Caco-2 (cell line): ENCODE measurements at regions of chr10 and their contacts with region 1.

Region 1: DNA sequence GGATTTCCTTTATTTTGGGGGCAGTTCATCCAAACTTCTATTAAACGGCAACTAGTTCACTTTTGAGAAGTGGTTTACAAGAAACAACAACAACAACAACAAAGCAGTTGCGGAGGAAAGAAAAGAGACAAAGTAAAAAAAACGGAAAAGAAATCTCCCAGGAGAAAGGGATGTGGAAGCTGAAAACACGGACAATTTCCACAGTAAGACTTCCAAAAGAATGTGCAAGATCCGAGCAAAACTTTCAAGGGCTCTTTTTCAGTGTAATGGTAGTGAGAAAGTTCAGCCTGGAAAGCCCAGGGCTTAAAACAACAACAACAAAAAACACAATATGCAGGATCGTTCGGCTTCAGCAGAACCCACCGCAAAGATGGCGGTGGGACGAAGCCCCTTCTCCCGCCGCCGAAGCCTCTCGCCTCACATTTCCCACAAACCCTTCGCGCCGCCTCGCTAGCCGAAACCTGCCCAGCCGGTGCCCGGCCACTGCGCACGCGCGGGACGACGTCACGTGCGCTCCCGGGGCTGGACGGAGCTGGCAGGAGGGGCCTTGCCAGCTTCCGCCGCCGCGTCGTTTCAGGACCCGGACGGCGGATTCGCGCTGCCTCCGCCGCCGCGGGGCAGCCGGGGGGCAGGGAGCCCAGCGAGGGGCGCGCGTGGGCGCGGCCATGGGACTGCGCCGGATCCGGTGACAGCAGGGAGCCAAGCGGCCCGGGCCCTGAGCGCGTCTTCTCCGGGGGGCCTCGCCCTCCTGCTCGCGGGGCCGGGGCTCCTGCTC is at the start of gene TNKS2:
- DNase-seq: peak; percentile 95 to 98
- H3K4me3 ChIP-seq: peak within 1 kb of the TSS; percentile 98
- H3K4me3 Mint-ChIP-seq: peak within 1 kb of the TSS; percentile 96
- H3K27ac Mint-ChIP-seq: peak within 1 kb of the TSS; percentile 97
- H3K4me1 ChIP-seq: peaks cover 24% of the 10 kb centered on the region
- H3K4me1 Mint-ChIP-seq: peaks cover 37% of the 10 kb centered on the region
- H3K27me3 ChIP-seq: no peaks in the 10 kb centered on the region
- H3K27me3 Mint-ChIP-seq: no peaks in the 10 kb centered on the region
- CTCF ChIP-seq: no peak
- total RNA-seq, gene TNKS2: 46.7 and 48.5 TPM in 2 replicates

Region 2: GRCh38 chr10:91779011-91779605 is 19.0 kb before region 1 on chr10:
- CTCF ChIA-PET with region 1: no interaction called
- POLR2A ChIA-PET with region 1: interaction called, 3 read pairs
- intact Hi-C with region 1: loop called (anchors 1 kb)
- DNase-seq: no peak
- H3K4me3 ChIP-seq: no peak overlapping the region
- H3K4me3 Mint-ChIP-seq: no peak overlapping the region
- H3K27ac Mint-ChIP-seq: no peak overlapping the region
- H3K4me1 ChIP-seq: 0 out of 2 replicates have a peak, but pooled peaks cover 8% of the 10 kb centered on the region
- H3K4me1 Mint-ChIP-seq: peaks cover 14% of the 10 kb centered on the region
- H3K27me3 ChIP-seq: no peaks in the 10 kb centered on the region
- H3K27me3 Mint-ChIP-seq: no peaks in the 10 kb centered on the region
- CTCF ChIP-seq: no peak

Region 3: DNA sequence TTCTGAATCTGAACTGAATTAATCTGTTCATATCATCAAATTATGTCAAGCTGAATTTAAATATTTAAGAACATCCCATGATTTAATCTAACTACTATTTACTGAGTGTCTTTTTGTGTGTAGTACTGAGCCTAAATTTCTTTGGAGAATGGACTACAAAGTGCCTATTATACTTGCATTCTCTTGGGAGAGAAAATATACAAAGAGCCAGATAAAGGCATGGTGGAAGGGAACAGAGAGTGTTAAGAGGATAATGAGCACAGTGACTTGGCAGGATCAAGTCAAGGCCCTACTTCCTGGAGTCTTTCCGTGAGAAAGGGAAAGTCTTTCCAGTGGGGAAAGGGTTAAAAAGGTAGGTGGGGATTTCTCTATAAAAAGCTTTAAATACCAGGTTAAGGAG is 15.2 kb after region 1 on chr10:
- CTCF ChIA-PET with region 1: no interaction called
- POLR2A ChIA-PET with region 1: interaction called, 6 read pairs
- intact Hi-C with region 1: loop called (anchors 2 kb)
- DNase-seq: no peak
- H3K4me3 ChIP-seq: no peak overlapping the region
- H3K4me3 Mint-ChIP-seq: no peak overlapping the region
- H3K27ac Mint-ChIP-seq: no peak overlapping the region
- H3K4me1 ChIP-seq: peaks cover 23% of the 10 kb centered on the region
- H3K4me1 Mint-ChIP-seq: peaks cover 24% of the 10 kb centered on the region
- H3K27me3 ChIP-seq: no peaks in the 10 kb centered on the region
- H3K27me3 Mint-ChIP-seq: no peaks in the 10 kb centered on the region
- CTCF ChIP-seq: no peak

Region 4: DNA sequence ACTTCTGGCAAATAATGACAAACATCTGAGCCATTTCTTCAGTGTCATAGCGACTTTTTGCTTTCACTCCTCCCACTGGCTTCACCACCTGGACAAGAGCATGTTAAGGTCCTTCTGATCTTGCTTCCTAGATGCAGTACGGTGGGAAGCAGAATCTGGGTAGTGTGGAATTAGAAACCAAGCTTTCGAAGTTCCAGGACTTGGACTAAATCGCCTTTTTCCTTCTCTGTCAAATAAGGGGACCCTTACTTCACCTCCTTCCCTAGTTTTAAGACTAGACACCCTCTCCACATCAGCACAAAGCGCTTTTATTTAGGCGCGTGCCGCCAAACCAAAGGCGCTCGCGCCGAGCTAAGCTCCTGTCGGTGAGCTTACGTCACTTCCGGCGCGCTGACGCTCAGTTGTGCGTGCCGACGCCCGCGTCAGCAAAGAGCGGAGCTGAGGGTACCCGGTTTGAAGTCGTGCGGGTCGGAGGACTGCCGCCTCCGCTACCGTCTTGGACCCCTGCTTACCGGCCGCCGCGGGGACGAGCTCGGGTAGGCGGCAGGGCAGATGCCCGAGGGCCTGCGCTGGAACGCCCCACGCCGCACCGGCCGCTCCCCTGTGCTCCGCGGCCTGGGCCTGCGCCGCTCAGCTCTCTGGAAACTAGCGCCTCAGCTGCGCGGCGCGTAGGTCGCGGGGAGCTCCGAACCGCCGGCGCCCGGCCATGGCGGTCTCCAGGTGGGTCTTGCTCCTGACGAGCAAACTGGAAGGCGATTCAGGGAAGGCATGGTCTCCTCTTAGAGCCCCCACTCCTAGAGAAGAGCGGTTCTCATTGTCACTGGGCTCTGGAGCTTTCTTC is 125.5 kb after region 1 on chr10 and contains the start of gene BTAF1:
- CTCF ChIA-PET with region 1: no interaction called
- POLR2A ChIA-PET with region 1: interaction called, 14 read pairs
- intact Hi-C with region 1: no loop called
- DNase-seq: peak; percentile 89
- H3K4me3 ChIP-seq: peak within 1 kb of the TSS; percentile 85
- H3K4me3 Mint-ChIP-seq: peak within 1 kb of the TSS; percentile 90
- H3K27ac Mint-ChIP-seq: peak within 1 kb of the TSS; percentile 97
- H3K4me1 ChIP-seq: peaks cover 14% of the 10 kb centered on the region; the same call in 1 of the 2 replicates
- H3K4me1 Mint-ChIP-seq: peaks cover 26% of the 10 kb centered on the region
- H3K27me3 ChIP-seq: no peaks in the 10 kb centered on the region
- H3K27me3 Mint-ChIP-seq: no peaks in the 10 kb centered on the region
- CTCF ChIP-seq: no peak
- total RNA-seq, gene BTAF1: 47.7 and 49.7 TPM in 2 replicates

Region 5: DNA sequence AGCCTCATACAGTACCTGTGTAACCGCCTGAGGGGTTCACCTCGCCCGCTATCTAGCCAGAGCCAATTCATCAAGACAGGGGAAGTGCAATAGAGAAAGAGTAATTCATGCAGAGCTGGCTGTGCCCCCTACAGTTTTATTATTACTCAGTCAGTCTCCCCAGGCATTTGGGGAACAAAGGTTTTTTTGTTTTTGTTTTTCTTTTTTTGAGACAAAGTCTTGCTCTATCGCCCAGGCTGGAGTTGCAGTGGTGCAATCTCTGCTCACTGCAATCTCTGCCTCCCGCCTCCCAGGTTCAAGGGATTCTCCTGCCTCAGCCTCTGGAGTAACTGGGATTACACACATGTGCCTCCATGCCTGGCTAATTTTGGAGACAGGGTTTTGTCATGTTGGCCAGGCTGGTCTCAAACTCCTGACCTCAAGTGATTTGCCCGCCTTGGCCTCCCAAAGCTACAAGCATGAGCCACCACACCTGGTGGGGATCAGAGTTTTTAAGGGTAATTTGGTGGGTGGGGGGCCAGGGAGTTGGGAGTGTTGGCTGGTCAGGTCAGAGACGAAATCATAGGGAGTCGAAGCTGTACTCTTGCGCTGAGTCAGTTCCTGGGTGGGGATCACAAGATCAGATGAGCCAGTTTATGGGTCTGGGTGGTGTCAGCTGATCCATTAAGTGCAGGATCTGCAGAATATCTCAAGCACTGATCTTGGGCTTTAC is 609.4 kb after region 1 on chr10:
- CTCF ChIA-PET with region 1: no interaction called
- POLR2A ChIA-PET with region 1: no interaction called
- intact Hi-C with region 1: no loop called
- DNase-seq: no peak
- H3K4me3 ChIP-seq: no peak overlapping the region
- H3K4me3 Mint-ChIP-seq: no peak overlapping the region
- H3K27ac Mint-ChIP-seq: no peak overlapping the region
- H3K4me1 ChIP-seq: no peaks in the 10 kb centered on the region
- H3K4me1 Mint-ChIP-seq: no peaks in the 10 kb centered on the region
- H3K27me3 ChIP-seq: no peaks in the 10 kb centered on the region; the same call in 1 of the 2 replicates
- H3K27me3 Mint-ChIP-seq: peaks cover 3% of the 10 kb centered on the region
- CTCF ChIP-seq: no peak